ENCODE measurements at regions of chr3 and their contacts with region 1.

Region 1: DNA sequence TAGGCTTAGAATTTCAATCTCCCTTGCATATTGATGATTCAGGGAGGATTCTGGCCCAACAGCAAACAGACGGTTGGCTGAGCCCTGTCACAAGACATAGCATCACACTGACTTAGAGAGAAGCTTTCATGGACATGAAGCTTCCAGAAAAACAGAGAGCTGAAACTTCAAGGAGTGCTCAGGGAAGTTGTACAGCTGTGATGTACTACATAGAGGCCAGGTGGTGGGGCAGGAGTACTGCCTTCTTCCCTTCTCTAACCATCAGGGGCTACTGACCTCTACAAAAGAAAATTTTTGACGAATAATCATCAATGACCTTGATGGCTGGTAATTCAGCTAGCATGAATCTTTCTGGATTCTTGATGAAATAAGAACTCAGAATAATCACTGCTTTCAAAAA is 378.5 kb downstream of the ERC2 start:
- DNase-seq: peak in 3 of 7 donors; percentile 7 to 25 (median 12)
- H3K4me3 ChIP-seq: no peak overlapping the region
- H3K27ac ChIP-seq: no peak overlapping the region
- H3K4me1 ChIP-seq: no peaks in the 10 kb centered on the region
- H3K27me3 ChIP-seq: no peaks in the 10 kb centered on the region
- CTCF ChIP-seq: peak in 3 of 6 experiments; percentile 14 to 24 (median 19)
- POLR2A ChIP-seq: no peak

Region 2: GRCh38 chr3:56251343-56251945 is 161.7 kb after region 1 on chr3:
- intact Hi-C with region 1: loop called in 1 of 2 experiments (anchors 10 kb)
- DNase-seq: peak; percentile 14 to 73 (median 44)
- H3K4me3 ChIP-seq: no peak overlapping the region
- H3K27ac ChIP-seq: no peak overlapping the region
- H3K4me1 ChIP-seq: no peaks in the 10 kb centered on the region
- H3K27me3 ChIP-seq: no peaks in the 10 kb centered on the region
- CTCF ChIP-seq: peak; percentile 72 to 85 (median 74)
- POLR2A ChIP-seq: no peak

Measured in adrenal gland (tissue), 19 donors.